CD14-positive monocyte (primary cell): ENCODE measurements at regions of chr6 and their contacts with region 1.

Region 1: DNA sequence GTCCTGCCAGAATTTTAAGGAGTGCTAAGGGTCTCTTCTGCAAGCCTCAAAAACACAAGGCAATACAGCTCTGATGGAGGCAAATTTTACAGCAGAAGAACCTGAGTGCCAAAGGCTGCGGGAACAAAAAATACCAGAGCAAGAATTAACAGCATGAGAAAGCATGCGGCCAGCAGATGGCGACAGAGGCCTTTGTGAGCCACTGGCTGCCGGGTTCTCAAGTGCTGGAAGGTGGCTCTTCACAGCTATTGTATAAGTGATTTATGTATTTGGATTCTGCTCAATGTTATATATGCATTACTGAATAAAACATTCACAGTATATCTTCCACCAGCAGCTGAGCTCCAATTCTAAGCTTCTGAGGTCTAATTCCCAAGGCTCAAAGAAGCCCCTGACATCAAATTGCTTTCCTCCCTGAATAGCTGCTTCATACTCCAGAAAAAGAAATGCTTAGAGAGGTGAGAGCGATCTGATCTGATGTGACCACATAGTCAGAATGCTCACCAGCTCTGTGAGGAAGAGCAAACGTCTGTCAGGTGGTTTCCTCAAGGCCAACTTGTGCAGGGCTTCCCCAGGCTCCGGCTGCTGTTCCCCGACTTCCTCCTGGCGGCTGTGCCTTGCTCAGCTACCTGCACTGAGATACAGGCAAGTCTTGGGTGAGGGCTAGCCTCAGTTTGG is 58.6 kb downstream of the PPP1R3G start:
- DNase-seq: peak; percentile 51 to 70 (median 67)
- H3K4me3 ChIP-seq: no peak overlapping the region
- H3K4me3 Mint-ChIP-seq: no peak overlapping the region
- H3K27ac ChIP-seq: no peak overlapping the region
- H3K27ac Mint-ChIP-seq: peak overlapping the region in 3 of 7 donors; percentile 15 to 62 (median 46)
- H3K4me1 ChIP-seq: no peaks in the 10 kb centered on the region
- H3K4me1 Mint-ChIP-seq: peaks cover 9% of the 10 kb centered on the region
- H3K27me3 ChIP-seq: no peaks in the 10 kb centered on the region
- H3K27me3 Mint-ChIP-seq: no peaks in the 10 kb centered on the region
- CTCF ChIP-seq: peak; percentile 86

Region 2: GRCh38 chr6:4388675-4389074 is 755.1 kb before region 1 on chr6:
- intact Hi-C with region 1: no loop called
- DNase-seq: no peak
- H3K4me3 ChIP-seq: no peak overlapping the region
- H3K4me3 Mint-ChIP-seq: no peak overlapping the region
- H3K27ac ChIP-seq: no peak overlapping the region
- H3K27ac Mint-ChIP-seq: no peak overlapping the region
- H3K4me1 ChIP-seq: no peaks in the 10 kb centered on the region
- H3K4me1 Mint-ChIP-seq: no peaks in the 10 kb centered on the region
- H3K27me3 ChIP-seq: no peaks in the 10 kb centered on the region
- H3K27me3 Mint-ChIP-seq: peaks cover 4 to 5% (median 5%) of the 10 kb centered on the region in 3 donors
- CTCF ChIP-seq: no peak

Region 3: DNA sequence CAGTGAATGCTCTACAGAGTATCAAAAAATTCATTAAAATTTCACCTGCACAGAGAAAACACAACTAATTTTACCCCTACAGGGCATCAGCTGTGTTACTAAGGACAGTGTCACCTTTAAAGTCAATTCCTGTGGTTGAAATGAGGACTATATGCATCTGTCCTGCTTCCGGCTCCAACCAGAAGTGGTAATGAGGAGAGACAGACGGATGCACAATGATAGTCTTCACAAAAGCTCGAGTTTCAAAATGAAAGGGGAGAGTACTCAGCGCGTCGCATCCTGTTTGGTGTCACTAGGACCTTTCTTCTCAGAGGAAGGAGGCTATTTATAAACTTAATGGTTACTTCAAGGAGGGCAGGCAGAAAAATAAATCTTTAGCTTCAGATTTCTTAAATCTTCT is 30.5 kb after region 1 on chr6:
- intact Hi-C with region 1: no loop called
- DNase-seq: no peak
- H3K4me3 ChIP-seq: peak overlapping the region in 1 of 3 experiments; percentile 16
- H3K4me3 Mint-ChIP-seq: peak overlapping the region in 1 of 2 donors; percentile 44
- H3K27ac ChIP-seq: no peak overlapping the region
- H3K27ac Mint-ChIP-seq: peak overlapping the region in 1 of 7 donors; percentile 44
- H3K4me1 ChIP-seq: peaks cover 10 to 14% of the 10 kb centered on the region in 2 donors
- H3K4me1 Mint-ChIP-seq: peaks cover 27% of the 10 kb centered on the region
- H3K27me3 ChIP-seq: no peaks in the 10 kb centered on the region
- H3K27me3 Mint-ChIP-seq: peaks cover 0 to 2% (median 2%) of the 10 kb centered on the region in 3 donors
- CTCF ChIP-seq: no peak

Region 4: DNA sequence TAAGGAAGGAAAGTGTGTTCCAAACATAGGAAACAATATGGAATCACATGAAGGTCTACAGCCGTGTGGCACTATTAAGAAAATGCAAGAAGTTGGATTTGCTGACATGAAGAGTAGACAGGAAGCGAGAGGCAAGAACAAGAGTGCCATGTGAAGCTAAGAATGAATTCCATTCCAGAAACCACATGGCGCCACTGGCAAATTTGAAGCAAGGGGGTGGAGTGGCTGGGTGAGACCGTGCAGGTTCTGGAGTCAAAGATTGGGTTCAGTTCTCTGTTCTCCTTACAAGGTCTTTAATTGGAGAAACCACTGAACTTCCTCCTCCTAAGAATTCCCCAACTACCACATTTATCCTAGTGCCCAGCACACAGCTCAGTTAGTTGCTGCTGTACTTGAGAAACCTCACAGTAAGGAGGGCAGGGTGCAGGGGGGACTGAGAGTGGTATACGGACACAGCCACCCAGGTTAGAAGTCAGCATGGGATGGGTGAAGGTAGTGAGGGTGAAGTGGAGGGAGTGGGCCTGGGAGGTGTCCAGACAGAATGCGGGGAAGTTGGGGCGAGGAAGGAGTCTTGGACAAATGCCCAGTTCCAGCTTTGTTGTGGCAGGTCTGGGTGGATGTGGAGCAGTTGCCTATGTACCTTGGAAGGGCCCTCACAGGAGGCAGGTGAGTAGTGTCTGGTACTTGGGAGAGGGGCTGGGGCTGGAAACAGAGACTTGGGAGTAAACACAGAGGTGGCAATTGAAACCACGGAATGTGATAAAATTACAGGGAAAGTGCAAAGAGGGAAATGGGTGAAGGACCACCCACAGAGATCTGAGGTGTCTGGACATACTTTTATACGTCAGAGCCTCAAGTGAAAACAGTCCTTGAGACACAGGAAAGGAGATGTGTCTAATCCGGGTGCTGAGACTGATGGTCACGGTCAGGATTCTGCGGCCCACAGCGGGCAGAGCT is 102.6 kb after region 1 on chr6:
- intact Hi-C with region 1: no loop called
- DNase-seq: no peak
- H3K4me3 ChIP-seq: no peak overlapping the region
- H3K4me3 Mint-ChIP-seq: no peak overlapping the region
- H3K27ac ChIP-seq: no peak overlapping the region
- H3K27ac Mint-ChIP-seq: peak overlapping the region in 5 of 7 donors; percentile 12 to 64 (median 43)
- H3K4me1 ChIP-seq: no peaks in the 10 kb centered on the region
- H3K4me1 Mint-ChIP-seq: peaks cover 2% of the 10 kb centered on the region
- H3K27me3 ChIP-seq: no peaks in the 10 kb centered on the region
- H3K27me3 Mint-ChIP-seq: no peaks in the 10 kb centered on the region
- CTCF ChIP-seq: no peak

Region 5: GRCh38 chr6:5379647-5380242 is 236.0 kb after region 1 on chr6:
- intact Hi-C with region 1: loop called (anchors 5 to 10 kb)
- DNase-seq: peak in 2 of 3 donors; percentile 5 to 24
- H3K4me3 ChIP-seq: no peak overlapping the region
- H3K4me3 Mint-ChIP-seq: no peak overlapping the region
- H3K27ac ChIP-seq: no peak overlapping the region
- H3K27ac Mint-ChIP-seq: no peak overlapping the region
- H3K4me1 ChIP-seq: no peaks in the 10 kb centered on the region
- H3K4me1 Mint-ChIP-seq: no peaks in the 10 kb centered on the region
- H3K27me3 ChIP-seq: no peaks in the 10 kb centered on the region
- H3K27me3 Mint-ChIP-seq: no peaks in the 10 kb centered on the region
- CTCF ChIP-seq: peak; percentile 76